ENCODE measurements at regions of chr10 and their contacts with region 1.

Region 1: DNA sequence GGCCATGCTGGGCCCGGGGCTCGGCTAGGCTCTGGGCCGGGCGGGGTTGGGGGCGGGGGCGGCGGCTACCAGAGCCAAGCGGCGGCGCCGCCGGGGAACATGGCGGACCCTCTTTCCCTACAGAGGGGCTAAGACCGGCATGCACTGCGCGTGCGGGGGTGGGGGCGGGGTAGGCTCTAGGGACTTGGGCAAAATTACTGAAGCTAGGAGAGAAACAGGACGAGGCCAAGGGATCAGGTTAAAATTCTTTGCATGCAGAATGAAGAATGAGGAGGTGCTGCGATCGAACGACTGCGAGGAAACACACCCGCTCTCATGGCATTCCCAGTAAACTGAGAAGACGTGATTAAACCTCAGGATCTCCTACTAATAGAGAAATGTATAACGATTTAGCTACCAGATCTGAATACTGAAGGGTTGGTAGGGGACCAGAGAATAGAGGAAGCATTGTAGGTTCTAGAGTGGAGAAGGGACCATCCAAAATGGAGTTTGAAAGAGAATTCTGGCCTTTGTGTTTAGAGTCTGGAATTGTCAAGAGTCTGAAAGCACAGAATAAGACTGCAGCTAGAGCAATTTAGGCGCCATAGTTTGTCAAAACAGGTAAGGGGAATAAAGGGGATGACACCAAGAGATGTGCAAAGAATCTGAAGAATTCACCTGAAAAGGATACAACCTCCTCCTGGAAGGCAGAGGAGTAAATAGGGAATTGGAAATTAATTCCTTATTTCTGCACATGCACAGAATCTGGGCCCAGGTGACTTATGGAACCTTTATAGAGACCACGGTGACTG is at the start of gene PPP3CB:
- DNase-seq: peak; percentile 84 to 97 (median 90)
- ATAC-seq: peak; percentile 82
- H3K4me3 ChIP-seq: peak within 1 kb of the TSS; percentile 95
- H3K4me3 Mint-ChIP-seq: peak within 1 kb of the TSS; percentile 91
- H3K27ac ChIP-seq: peak within 1 kb of the TSS; percentile 90 to 95
- H3K27ac Mint-ChIP-seq: peak within 1 kb of the TSS; percentile 78
- H3K4me1 ChIP-seq: peaks cover 31% of the 10 kb centered on the region
- H3K4me1 Mint-ChIP-seq: peaks cover 58% of the 10 kb centered on the region
- H3K27me3 ChIP-seq: no peaks in the 10 kb centered on the region
- H3K27me3 Mint-ChIP-seq: no peaks in the 10 kb centered on the region
- CTCF ChIP-seq: no peak
- total RNA-seq, gene PPP3CB: 20.2 to 20.3 TPM

Region 2: GRCh38 chr10:72354478-72355213 is 1141.4 kb before region 1 on chr10 and contains the start of gene DNAJB12:
- CTCF ChIA-PET with region 1: no interaction called
- POLR2A ChIA-PET with region 1: no interaction called
- intact Hi-C with region 1: loop called in 1 of 2 experiments (anchors 10 kb)
- DNase-seq: peak; percentile 78 to 96 (median 88)
- ATAC-seq: peak; percentile 86
- H3K4me3 ChIP-seq: peak within 1 kb of the TSS; percentile 95
- H3K4me3 Mint-ChIP-seq: peak within 1 kb of the TSS; percentile 99
- H3K27ac ChIP-seq: peak within 1 kb of the TSS; percentile 95 to 97
- H3K27ac Mint-ChIP-seq: peak within 1 kb of the TSS; percentile 92
- H3K4me1 ChIP-seq: peaks cover 28% of the 10 kb centered on the region
- H3K4me1 Mint-ChIP-seq: peaks cover 47% of the 10 kb centered on the region
- H3K27me3 ChIP-seq: no peaks in the 10 kb centered on the region
- H3K27me3 Mint-ChIP-seq: no peaks in the 10 kb centered on the region
- CTCF ChIP-seq: no peak
- total RNA-seq, gene DNAJB12: 25.2 to 27.0 TPM

Region 3: DNA sequence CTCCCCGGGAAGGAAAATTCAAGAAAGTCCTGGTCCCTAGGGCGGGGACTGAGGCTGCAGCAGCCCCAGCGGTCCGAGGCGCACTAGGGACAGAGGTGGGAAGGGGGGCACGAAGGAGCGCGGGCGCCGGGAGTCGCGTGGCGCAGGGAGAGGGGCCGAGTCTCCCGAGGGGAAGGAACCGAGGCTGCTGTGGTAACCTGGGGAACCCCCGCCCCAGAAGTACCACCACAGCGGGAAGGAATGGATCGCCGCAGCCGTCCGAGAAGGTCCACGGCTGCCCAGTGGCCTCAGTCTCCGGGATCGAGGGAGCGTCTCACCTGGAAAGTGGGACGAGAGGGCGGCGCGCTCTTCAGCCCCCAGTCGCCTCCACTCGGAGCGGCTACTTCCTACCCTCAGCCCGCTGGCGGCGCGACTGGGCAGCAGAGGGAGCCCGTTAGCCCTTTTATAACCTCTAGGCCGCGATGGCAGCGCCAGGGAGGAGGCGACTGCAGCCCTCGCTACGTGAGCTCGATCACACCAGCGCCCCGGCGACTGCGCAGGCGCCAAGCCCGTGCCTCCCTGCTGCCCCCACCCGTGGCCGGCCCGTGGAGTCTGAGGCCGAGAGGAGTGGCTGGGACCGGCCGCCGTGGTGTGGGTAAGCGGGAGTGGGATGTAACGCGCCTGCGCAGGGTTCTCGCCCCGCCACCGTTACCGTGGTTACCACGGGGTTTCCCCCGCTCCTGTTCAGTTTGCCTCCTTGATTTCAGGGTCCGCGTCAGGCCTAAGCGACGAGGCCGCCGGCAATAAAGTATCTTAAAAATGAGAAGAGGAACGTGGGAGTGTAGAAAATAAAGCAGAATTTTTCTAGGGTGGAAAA is 399.4 kb before region 1 on chr10 and contains the start of gene P4HA1:
- CTCF ChIA-PET with region 1: no interaction called
- POLR2A ChIA-PET with region 1: interaction called, 3 read pairs
- intact Hi-C with region 1: loop called in 1 of 2 experiments (anchors 5 kb)
- DNase-seq: peak; percentile 93 to 100 (median 97)
- ATAC-seq: peak; percentile 84
- H3K4me3 ChIP-seq: peak within 1 kb of the TSS; percentile 97
- H3K4me3 Mint-ChIP-seq: peak within 1 kb of the TSS; percentile 94
- H3K27ac ChIP-seq: peak within 1 kb of the TSS; percentile 89 to 98
- H3K27ac Mint-ChIP-seq: peak within 1 kb of the TSS; percentile 87
- H3K4me1 ChIP-seq: peaks cover 7% of the 10 kb centered on the region
- H3K4me1 Mint-ChIP-seq: peaks cover 41% of the 10 kb centered on the region
- H3K27me3 ChIP-seq: no peaks in the 10 kb centered on the region
- H3K27me3 Mint-ChIP-seq: no peaks in the 10 kb centered on the region
- CTCF ChIP-seq: peak; percentile 79
- total RNA-seq, gene P4HA1: 9.0 to 9.1 TPM

Region 4: DNA sequence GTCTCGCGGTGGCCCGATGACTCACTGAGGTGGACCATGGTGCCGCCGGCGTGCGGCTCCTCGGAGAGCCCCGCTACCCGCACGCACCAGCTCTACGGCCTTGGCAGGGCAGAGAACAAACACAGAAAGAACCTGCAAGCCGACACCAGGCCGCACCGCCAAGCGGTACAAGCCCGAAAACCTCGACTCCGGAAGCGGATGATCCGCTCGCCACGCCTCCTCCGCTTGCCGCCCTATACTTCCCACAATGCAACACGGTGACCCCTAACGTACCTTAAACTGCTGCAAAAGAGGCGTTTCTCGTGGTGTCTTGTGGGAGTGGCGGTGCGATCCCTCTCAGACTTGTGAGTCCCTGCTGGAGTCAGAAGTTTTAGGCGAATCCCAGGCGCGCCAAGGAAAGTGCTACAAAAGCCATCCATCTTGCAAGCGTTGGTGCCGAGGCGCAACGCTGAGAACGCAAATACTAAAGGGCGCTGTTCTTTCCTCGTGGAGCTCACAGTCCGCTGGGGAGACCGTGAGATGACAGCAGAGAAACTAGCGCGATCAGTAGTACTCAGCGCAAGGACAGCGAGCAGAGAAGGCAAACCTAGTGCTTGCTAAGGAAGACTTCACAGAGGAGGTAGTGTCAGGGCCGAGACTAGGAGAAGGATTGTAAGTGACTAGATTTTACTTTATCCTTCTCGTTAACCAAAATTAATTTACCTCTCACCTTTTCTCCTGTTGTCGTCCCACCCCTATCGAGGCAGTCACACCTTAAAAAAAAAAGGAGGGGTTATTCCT is 243.4 kb before region 1 on chr10 and contains the start of gene MRPS16:
- CTCF ChIA-PET with region 1: no interaction called
- POLR2A ChIA-PET with region 1: interaction called, 20 read pairs
- intact Hi-C with region 1: loop called (anchors 2 kb)
- DNase-seq: peak; percentile 85 to 97 (median 90)
- ATAC-seq: peak; percentile 87
- H3K4me3 ChIP-seq: peak within 1 kb of the TSS; percentile 93
- H3K4me3 Mint-ChIP-seq: peak within 1 kb of the TSS; percentile 96
- H3K27ac ChIP-seq: peak within 1 kb of the TSS; percentile 78 to 91
- H3K27ac Mint-ChIP-seq: peak within 1 kb of the TSS; percentile 94
- H3K4me1 ChIP-seq: peaks cover 23% of the 10 kb centered on the region
- H3K4me1 Mint-ChIP-seq: peaks cover 40% of the 10 kb centered on the region
- H3K27me3 ChIP-seq: no peaks in the 10 kb centered on the region
- H3K27me3 Mint-ChIP-seq: no peaks in the 10 kb centered on the region
- CTCF ChIP-seq: no peak
- total RNA-seq, gene MRPS16: 28.3 to 31.9 TPM

Region 5: GRCh38 chr10:73597346-73597745 is 101.3 kb after region 1 on chr10:
- CTCF ChIA-PET with region 1: no interaction called
- POLR2A ChIA-PET with region 1: no interaction called
- intact Hi-C with region 1: no loop called
- DNase-seq: no peak
- ATAC-seq: no peak
- H3K4me3 ChIP-seq: no peak overlapping the region
- H3K4me3 Mint-ChIP-seq: no peak overlapping the region
- H3K27ac ChIP-seq: no peak overlapping the region
- H3K27ac Mint-ChIP-seq: no peak overlapping the region
- H3K4me1 ChIP-seq: no peaks in the 10 kb centered on the region
- H3K4me1 Mint-ChIP-seq: peaks cover 6% of the 10 kb centered on the region
- H3K27me3 ChIP-seq: no peaks in the 10 kb centered on the region
- H3K27me3 Mint-ChIP-seq: no peaks in the 10 kb centered on the region
- CTCF ChIP-seq: no peak

Region 6: GRCh38 chr10:73625884-73626752 is 130.0 kb after region 1 on chr10:
- CTCF ChIA-PET with region 1: no interaction called
- POLR2A ChIA-PET with region 1: interaction called, 28 read pairs
- intact Hi-C with region 1: loop called in 1 of 2 experiments (anchors 5 kb)
- DNase-seq: peak; percentile 84 to 99 (median 90)
- ATAC-seq: peak; percentile 94
- H3K4me3 ChIP-seq: peak overlapping the region; percentile 68
- H3K4me3 Mint-ChIP-seq: peak overlapping the region; percentile 91
- H3K27ac ChIP-seq: peak overlapping the region; percentile 62 to 66
- H3K27ac Mint-ChIP-seq: peak overlapping the region; percentile 90
- H3K4me1 ChIP-seq: peaks cover 17% of the 10 kb centered on the region
- H3K4me1 Mint-ChIP-seq: peaks cover 25% of the 10 kb centered on the region
- H3K27me3 ChIP-seq: no peaks in the 10 kb centered on the region
- H3K27me3 Mint-ChIP-seq: no peaks in the 10 kb centered on the region
- CTCF ChIP-seq: no peak

Region 7: GRCh38 chr10:73743905-73744663 is 248.0 kb after region 1 on chr10 and contains the start of gene SEC24C:
- CTCF ChIA-PET with region 1: no interaction called
- POLR2A ChIA-PET with region 1: interaction called, 8 read pairs
- intact Hi-C with region 1: loop called in 1 of 2 experiments (anchors 5 kb)
- DNase-seq: peak; percentile 90 to 99 (median 94)
- ATAC-seq: peak; percentile 85
- H3K4me3 ChIP-seq: peak within 1 kb of the TSS; percentile 93
- H3K4me3 Mint-ChIP-seq: peak within 1 kb of the TSS; percentile 99
- H3K27ac ChIP-seq: peak within 1 kb of the TSS; percentile 90 to 99
- H3K27ac Mint-ChIP-seq: peak within 1 kb of the TSS; percentile 99
- H3K4me1 ChIP-seq: peaks cover 48% of the 10 kb centered on the region
- H3K4me1 Mint-ChIP-seq: peaks cover 41% of the 10 kb centered on the region
- H3K27me3 ChIP-seq: no peaks in the 10 kb centered on the region
- H3K27me3 Mint-ChIP-seq: no peaks in the 10 kb centered on the region
- CTCF ChIP-seq: no peak
- total RNA-seq, gene SEC24C: 52.0 to 54.2 TPM

Region 8: GRCh38 chr10:73810735-73811465 is 314.8 kb after region 1 on chr10:
- CTCF ChIA-PET with region 1: no interaction called
- POLR2A ChIA-PET with region 1: no interaction called
- intact Hi-C with region 1: loop called in 1 of 2 experiments (anchors 10 kb)
- DNase-seq: peak in 13 of 14 experiments; percentile 40 to 80 (median 65)
- ATAC-seq: peak; percentile 17
- H3K4me3 ChIP-seq: peak overlapping the region; percentile 70
- H3K4me3 Mint-ChIP-seq: peak overlapping the region; percentile 97
- H3K27ac ChIP-seq: peak overlapping the region; percentile 55 to 91
- H3K27ac Mint-ChIP-seq: peak overlapping the region; percentile 99
- H3K4me1 ChIP-seq: peaks cover 53% of the 10 kb centered on the region
- H3K4me1 Mint-ChIP-seq: peaks cover 52% of the 10 kb centered on the region
- H3K27me3 ChIP-seq: no peaks in the 10 kb centered on the region
- H3K27me3 Mint-ChIP-seq: no peaks in the 10 kb centered on the region
- CTCF ChIP-seq: no peak

Region 9: DNA sequence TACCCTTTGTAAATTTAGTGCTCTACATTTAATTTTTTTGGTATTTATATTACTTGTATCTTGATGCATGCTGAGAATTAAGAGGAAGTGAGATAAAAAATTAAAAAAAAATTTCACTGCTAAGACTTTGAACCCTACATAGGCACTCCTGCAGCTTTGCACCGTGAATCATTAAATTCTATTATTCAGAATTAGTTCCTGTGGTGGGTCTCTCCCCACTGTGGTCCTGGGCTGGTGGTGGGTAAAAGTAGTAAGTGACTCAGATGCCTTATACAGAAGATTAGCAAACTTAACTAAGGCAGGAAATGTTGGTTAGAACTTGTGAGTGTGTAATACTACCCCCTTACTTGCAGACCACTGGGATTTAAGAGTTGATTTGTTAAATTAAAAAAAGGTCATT is 582.0 kb after region 1 on chr10:
- CTCF ChIA-PET with region 1: no interaction called
- POLR2A ChIA-PET with region 1: no interaction called
- intact Hi-C with region 1: no loop called
- DNase-seq: peak in 4 of 14 experiments; percentile 9 to 44 (median 30)
- ATAC-seq: peak; percentile 46
- H3K4me3 ChIP-seq: no peak overlapping the region
- H3K4me3 Mint-ChIP-seq: no peak overlapping the region
- H3K27ac ChIP-seq: no peak overlapping the region
- H3K27ac Mint-ChIP-seq: peak overlapping the region; percentile 1
- H3K4me1 ChIP-seq: no peaks in the 10 kb centered on the region
- H3K4me1 Mint-ChIP-seq: peaks cover 15% of the 10 kb centered on the region
- H3K27me3 ChIP-seq: no peaks in the 10 kb centered on the region
- H3K27me3 Mint-ChIP-seq: no peaks in the 10 kb centered on the region
- CTCF ChIP-seq: no peak